Activated naive CD4-positive, alpha-beta T cell treated with anti-CD3 and anti-CD28 coated beads for 36 hours (primary cell): ENCODE measurements at regions of chr2 and their contacts with region 1.

Region 1: DNA sequence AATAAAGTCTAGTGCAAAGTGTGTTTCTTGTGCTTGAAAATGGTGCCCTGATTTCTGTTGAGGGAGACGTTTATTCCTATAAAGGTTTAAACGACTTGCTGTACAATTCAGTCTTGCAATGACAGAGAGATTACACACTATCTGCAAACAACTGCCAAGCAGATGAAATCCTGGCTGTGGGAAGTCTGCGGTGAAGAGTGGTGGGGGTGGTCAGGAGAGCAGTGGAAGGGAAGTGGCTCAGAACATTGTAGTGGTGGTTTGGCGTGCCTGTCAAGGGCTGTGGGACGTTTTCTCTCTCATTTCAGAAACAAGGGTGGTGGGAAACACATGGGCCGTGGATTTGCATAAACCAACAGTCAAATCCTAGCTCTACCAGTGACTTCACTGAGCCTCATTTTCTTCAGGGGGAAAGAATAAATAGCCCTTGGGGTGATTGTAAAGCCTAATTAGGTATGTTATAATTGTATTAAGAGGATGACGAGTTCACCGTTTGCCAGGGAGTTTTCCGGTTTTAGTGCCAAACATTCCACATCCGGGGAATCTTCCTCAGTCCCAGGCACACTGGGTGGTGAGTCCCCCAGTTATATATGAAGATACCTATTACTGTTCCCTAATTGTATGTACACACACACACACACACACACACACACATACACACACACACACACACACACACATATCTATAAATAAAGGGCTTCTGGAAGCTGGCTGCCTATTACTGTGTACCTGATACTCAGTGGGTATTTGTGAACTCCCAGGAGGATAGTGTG is 115.0 kb downstream of the SPTBN1 start:
- DNase-seq: peak; percentile 93
- H3K4me3 Mint-ChIP-seq: peak overlapping the region; percentile 48
- H3K27ac Mint-ChIP-seq: peak overlapping the region; percentile 91
- H3K4me1 Mint-ChIP-seq: peaks cover 87% of the 10 kb centered on the region
- H3K27me3 Mint-ChIP-seq: no peaks in the 10 kb centered on the region

Region 2: DNA sequence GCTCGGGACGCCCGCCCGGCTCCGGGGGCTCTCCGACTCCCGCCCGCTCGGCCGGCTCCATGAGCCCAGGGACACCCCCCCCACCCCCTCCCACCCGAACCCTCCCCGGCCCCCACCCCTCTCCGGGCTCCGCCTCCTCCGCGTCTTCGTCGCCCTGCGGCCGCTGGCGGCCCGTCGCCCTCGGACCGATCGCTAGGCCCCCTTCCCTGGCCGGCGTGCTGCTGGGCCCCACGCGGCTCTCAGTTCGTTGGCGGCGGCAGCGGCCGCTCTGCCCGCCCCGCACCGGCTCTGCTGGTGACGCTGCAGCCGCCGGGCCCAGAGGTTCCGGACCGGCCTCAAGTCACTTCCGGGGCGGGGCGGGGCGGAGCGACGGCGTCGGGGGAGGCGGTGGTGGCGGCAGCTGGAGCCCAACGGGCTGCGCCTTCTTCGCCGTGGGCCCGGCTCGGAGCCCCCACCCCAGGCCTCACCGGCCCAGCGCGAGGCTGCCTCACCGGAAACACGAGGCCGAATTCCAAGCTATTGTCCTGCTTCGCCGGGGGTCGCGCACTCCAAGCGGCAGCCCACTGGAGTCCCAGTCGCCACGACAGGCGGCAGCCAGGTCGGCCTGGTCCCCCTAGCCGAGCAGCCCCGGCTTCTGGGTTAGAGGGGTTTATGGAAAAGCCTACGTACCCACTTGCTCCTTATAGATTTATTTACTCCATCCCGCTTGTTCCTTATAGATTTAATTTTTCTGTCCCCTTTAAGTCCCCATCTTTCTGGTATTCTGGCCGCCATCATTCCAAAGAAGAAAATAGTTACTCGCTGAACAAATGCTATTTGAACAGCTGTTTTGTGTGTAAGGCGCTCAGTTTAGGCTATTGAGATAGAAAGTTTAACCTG is 600.1 kb before region 1 on chr2 and contains the start of gene PSME4:
- CTCF ChIA-PET with region 1: no interaction called
- intact Hi-C with region 1: loop called (anchors 5 kb)
- DNase-seq: peak; percentile 95
- H3K4me3 Mint-ChIP-seq: peak within 1 kb of the TSS; percentile 83
- H3K27ac Mint-ChIP-seq: peak within 1 kb of the TSS; percentile 86
- H3K4me1 Mint-ChIP-seq: peaks cover 38% of the 10 kb centered on the region
- H3K27me3 Mint-ChIP-seq: no peaks in the 10 kb centered on the region
- total RNA-seq, gene PSME4: 31.5 to 38.8 TPM

Region 3: GRCh38 chr2:54522624-54523281 is 48.4 kb before region 1 on chr2:
- CTCF ChIA-PET with region 1: interaction called, 5 read pairs
- intact Hi-C with region 1: loop called (anchors 1 kb)
- DNase-seq: peak; percentile 73
- H3K4me3 Mint-ChIP-seq: no peak overlapping the region
- H3K27ac Mint-ChIP-seq: no peak overlapping the region
- H3K4me1 Mint-ChIP-seq: peaks cover 15% of the 10 kb centered on the region
- H3K27me3 Mint-ChIP-seq: no peaks in the 10 kb centered on the region

Region 4: GRCh38 chr2:54589340-54590215 is 18.5 kb after region 1 on chr2:
- CTCF ChIA-PET with region 1: interaction called, 6 read pairs
- intact Hi-C with region 1: loop called (anchors 1 kb)
- DNase-seq: peak; percentile 76
- H3K4me3 Mint-ChIP-seq: peak overlapping the region; percentile 27
- H3K27ac Mint-ChIP-seq: peak overlapping the region; percentile 90
- H3K4me1 Mint-ChIP-seq: peaks cover 85% of the 10 kb centered on the region
- H3K27me3 Mint-ChIP-seq: no peaks in the 10 kb centered on the region

Region 5: GRCh38 chr2:54606393-54606969 is 35.4 kb after region 1 on chr2:
- CTCF ChIA-PET with region 1: interaction called, 8 read pairs
- intact Hi-C with region 1: loop called (anchors 1 kb)
- DNase-seq: peak; percentile 79
- H3K4me3 Mint-ChIP-seq: peak overlapping the region; percentile 53
- H3K27ac Mint-ChIP-seq: peak overlapping the region; percentile 80
- H3K4me1 Mint-ChIP-seq: peaks cover 84% of the 10 kb centered on the region
- H3K27me3 Mint-ChIP-seq: no peaks in the 10 kb centered on the region

Region 6: GRCh38 chr2:54680397-54681041 is 109.4 kb after region 1 on chr2:
- CTCF ChIA-PET with region 1: no interaction called
- intact Hi-C with region 1: loop called (anchors 1 kb)
- DNase-seq: peak; percentile 68
- H3K4me3 Mint-ChIP-seq: no peak overlapping the region
- H3K27ac Mint-ChIP-seq: peak overlapping the region; percentile 11
- H3K4me1 Mint-ChIP-seq: peaks cover 18% of the 10 kb centered on the region
- H3K27me3 Mint-ChIP-seq: peaks cover 37% of the 10 kb centered on the region

Region 7: GRCh38 chr2:55232084-55232862 is 661.2 kb after region 1 on chr2 and contains the starts of genes CLHC1 and RPS27A:
- CTCF ChIA-PET with region 1: no interaction called
- intact Hi-C with region 1: loop called (anchors 5 kb)
- DNase-seq: peak; percentile 94
- H3K4me3 Mint-ChIP-seq: peak within 1 kb of the TSS; percentile 97
- H3K27ac Mint-ChIP-seq: peak within 1 kb of the TSS; percentile 95
- H3K4me1 Mint-ChIP-seq: peaks cover 52% of the 10 kb centered on the region
- H3K27me3 Mint-ChIP-seq: no peaks in the 10 kb centered on the region
- total RNA-seq, gene CLHC1: 2.4 to 3.1 TPM
- total RNA-seq, gene RPS27A: 1,468 to 1,556 TPM